ENCODE measurements at regions of chr1 and their contacts with region 1.

Region 1: DNA sequence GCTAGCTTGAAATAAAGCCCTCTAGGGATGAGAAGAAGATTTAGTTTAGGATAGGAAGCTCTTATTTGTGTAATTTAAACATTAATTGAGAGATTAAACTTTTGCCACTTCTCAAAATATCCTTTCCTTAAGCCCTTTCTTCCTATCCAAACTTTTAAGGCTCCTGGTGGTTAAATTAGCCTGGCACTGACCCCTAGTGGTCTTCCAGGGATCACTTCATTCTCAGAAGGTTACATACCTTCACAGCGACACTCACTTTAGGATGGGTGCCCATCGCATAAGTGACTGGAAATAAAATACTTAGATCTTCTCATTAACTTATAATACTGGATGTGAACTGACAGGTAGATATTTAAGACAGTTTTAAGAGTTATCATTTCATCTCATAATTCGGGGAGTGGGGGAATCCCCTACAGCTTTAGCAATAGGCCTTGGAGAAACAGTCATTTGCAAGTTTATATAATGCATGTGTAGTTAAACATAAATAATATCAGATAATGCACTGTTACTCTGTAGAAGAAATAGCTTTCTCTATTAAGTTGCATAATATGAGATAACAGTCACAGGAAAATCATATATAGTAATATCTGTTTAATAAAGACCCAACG is 7.4 kb downstream of the LHX9 start:
- DNase-seq: no peak
- H3K4me3 ChIP-seq: no peak overlapping the region
- H3K27ac ChIP-seq: no peak overlapping the region
- H3K4me1 ChIP-seq: no peaks in the 10 kb centered on the region
- H3K27me3 ChIP-seq: peaks cover 11% of the 10 kb centered on the region
- CTCF ChIP-seq: peak; percentile 39 to 65 (median 59)

Region 2: GRCh38 chr1:197526736-197527371 is 397.8 kb before region 1 on chr1:
- intact Hi-C with region 1: loop called (anchors 5 kb)
- DNase-seq: no peak
- H3K4me3 ChIP-seq: no peak overlapping the region
- H3K27ac ChIP-seq: no peak overlapping the region
- H3K4me1 ChIP-seq: no peaks in the 10 kb centered on the region
- H3K27me3 ChIP-seq: no peaks in the 10 kb centered on the region
- CTCF ChIP-seq: peak; percentile 25 to 69 (median 66)

Region 3: GRCh38 chr1:197614916-197615692 is 309.5 kb before region 1 on chr1:
- intact Hi-C with region 1: loop called (anchors 2 kb)
- DNase-seq: no peak
- H3K4me3 ChIP-seq: no peak overlapping the region
- H3K27ac ChIP-seq: no peak overlapping the region
- H3K4me1 ChIP-seq: no peaks in the 10 kb centered on the region
- H3K27me3 ChIP-seq: no peaks in the 10 kb centered on the region
- CTCF ChIP-seq: peak in 1 of 3 experiments; percentile 48

Measured in ascending aorta (tissue), 2 donors.